Left ventricle myocardium superior (tissue), 1 donor: ENCODE measurements at regions of chr11 and their contacts with region 1.

Region 1: DNA sequence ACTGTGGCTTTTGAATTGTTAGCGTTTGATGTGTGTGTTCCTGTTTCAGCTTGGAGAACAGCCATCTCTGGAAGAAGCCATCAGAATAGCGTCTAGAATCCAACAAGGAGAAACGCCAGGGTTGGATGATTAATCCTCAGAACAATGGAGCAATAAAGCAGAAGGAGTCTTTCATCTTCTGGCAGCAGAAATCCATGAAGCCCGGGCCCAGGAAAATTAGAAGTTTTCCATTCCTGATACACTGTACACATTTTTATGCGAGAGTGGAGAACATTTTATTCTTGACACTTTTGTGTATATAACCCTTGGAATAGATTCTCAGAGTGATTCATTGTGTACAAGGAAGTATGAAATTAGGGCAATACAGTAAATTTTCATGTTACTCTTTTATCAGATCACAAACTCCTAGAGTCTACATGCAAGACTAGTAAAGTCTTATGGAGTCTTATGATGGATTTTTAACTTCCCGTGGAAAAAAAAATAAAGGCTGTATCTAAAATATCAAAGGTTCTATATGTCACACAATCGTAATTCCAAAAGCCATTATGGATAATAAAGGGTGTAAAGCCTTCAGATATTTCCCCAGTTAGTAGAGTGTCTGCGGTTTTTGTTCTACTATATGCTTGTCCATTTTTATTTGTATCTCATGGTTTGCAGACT is 45.9 kb upstream of the WEE1 start:
- DNase-seq: no peak
- ATAC-seq: peak; percentile 52

Region 2: DNA sequence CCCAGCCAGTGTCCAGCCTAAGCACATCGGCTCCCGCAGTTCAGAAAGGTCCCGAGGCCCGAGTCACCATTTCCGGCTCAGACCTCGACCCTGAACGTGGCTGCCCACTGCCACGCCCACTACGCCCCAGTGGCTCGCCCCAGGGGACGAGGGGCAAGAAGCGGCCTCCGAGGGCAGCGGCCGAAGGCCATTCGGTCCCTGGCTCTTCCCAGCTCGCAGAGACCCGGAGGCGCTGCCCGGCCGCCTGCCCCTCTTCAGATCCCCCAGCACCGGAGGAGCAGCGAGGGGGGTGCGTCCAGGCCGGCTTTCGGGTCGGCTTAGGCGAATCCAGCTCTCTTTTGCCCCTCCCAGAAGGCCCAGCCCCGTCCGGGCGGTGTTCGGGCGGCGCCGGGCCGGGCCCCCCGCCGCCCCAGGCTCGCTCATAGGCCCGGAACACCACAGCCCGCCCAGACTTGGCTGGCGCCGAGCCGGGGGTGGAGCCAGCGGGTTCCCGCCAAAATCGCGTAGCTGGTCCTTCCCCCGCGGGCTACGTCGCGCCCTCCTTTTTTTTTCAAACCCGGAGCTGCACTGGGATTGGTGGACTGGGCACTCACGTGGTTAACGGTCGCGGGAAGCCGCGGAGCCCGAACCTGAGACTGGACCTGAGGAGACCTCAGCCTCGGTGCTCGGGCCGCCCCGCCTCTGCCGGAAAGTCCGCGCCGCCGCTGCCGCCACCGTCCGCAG is 45.6 kb after region 1 on chr11 and contains the start of gene WEE1:
- intact Hi-C with region 1: loop called (anchors 10 kb)
- DNase-seq: peak; percentile 99
- ATAC-seq: peak; percentile 94
- total RNA-seq, gene WEE1: 38.3 TPM